ENCODE measurements at regions of chrX and their contacts with region 1.

Region 1: DNA sequence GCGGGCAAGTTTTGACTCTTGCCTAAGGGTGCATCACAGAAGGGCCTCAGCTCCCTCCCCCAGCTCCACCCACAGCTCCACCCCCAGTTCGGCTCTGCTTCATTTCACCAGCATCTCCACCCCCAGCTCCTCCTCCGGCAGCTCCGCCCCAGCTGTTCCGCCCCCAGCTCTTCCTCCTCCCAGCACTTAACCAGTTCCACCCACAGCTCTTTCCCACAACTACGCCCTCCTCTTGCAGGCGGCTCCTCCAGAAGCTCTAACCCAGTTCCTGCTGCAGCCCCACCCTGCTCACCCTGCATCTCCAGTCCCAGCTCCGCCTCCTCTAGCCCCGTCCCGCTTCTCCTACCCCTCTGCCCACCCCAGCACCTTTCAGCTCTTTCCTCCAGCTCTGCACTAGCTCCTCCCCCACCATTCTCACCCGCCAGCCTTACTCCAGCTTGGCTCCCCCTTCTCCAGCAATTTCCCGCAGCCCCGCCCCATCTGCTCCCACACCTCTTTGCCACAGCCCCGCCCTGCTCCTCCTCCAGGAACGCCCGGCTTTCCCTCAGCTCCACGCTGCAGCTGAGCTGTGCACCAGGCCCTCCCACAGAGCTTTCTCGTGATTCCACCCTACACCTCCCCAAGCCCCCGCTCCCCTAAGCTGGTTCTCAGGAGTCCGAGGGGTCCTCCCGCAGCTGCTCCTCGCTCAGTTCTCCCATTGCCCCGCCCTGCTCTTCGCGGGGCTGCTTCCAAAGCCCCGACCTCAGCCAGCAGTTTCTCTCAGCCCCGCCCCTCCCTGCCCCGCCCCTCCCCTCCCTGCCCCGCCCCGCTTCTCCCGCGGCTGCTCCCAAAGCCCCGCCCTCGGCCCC is 1.3 kb upstream of the EOLA1 start:
- DNase-seq: peak; percentile 82
- ATAC-seq: peak; percentile 57
- H3K4me3 Mint-ChIP-seq: peak overlapping the region; percentile 90
- H3K27ac Mint-ChIP-seq: peak overlapping the region; percentile 96
- H3K4me1 Mint-ChIP-seq: peaks cover 3% of the 10 kb centered on the region
- H3K27me3 Mint-ChIP-seq: no peaks in the 10 kb centered on the region

Region 2: DNA sequence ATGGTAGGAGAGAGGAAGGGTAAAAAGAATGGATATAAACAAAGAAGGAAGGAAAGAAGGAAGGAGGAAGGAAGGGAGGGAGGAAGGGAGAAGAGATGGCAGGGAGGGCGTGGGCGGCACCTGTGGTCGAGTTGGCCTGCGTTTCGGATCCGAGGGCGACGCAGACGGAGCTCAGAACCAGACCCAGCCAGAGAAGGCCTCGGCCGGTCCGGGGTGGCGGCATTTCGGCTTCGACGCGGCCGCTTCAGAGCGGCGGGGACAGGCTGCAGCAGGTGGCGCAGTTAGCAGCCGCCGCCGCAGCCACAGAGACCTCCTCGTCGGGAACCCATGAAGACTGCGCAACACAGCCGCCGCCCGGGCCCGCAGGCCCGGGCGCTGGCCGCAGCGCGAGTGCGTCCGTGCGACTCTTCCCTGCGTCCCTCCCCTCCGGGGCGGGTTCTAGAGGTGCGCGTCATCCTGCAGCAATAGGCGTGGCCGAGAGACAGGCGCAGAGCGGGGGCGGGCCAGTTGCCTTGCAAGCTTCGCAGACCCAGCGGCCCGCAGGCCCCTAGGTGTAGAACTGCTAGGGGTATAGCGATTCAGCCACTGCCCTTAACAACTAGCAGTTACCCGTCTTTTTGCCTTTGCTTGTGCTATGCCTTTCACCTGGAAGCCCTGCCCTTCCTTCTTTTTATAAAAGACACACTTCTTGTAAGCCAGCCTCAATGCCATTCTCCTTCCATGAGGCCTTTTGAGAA is 34.4 kb before region 1 on chrX and contains the start of gene IDS:
- POLR2A ChIA-PET with region 1: interaction called, 22 read pairs
- DNase-seq: peak; percentile 84
- ATAC-seq: peak; percentile 76
- H3K4me3 Mint-ChIP-seq: peak within 1 kb of the TSS; percentile 93
- H3K27ac Mint-ChIP-seq: peak within 1 kb of the TSS; percentile 97
- H3K4me1 Mint-ChIP-seq: peaks cover 21% of the 10 kb centered on the region
- H3K27me3 Mint-ChIP-seq: peaks cover 3% of the 10 kb centered on the region
- total RNA-seq, gene IDS: 108 to 109 TPM

Region 3: DNA sequence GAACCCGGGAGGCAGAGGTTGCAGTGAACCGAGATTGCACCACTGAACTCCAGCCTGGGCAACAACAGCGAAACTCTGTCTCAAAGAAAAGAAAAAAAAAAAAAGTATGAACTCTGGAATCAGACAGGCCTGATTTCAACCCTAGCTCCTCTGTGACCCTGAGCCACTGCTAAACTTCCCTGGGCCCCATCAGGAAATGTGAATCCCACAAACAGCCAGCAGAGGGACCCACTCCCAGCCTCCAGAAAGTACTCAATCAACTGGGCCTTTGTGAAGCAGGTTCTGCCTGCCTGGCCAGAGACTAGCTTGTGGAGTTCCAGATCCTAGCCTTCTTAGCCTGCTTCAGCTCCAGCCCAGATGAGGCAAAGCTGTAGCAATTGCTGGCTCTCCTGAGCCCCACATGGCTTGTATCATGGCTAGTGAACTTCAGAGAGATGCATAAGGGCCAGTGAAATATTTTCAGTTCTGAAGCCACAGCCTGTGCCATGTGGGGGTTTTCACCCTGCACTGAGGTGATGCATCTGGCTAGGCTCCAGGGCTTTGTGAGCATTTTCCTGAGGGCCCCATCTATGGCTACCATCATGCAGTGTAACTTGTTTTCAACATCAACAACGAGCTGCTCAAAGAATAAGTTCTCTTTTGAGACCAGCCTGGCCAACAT is 27.2 kb before region 1 on chrX:
- POLR2A ChIA-PET with region 1: interaction called, 12 read pairs
- DNase-seq: peak; percentile 41
- ATAC-seq: peak; percentile 71
- H3K4me3 Mint-ChIP-seq: peak overlapping the region; percentile 50
- H3K27ac Mint-ChIP-seq: peak overlapping the region; percentile 67
- H3K4me1 Mint-ChIP-seq: peaks cover 36% of the 10 kb centered on the region
- H3K27me3 Mint-ChIP-seq: peaks cover 3% of the 10 kb centered on the region

Region 4: GRCh38 chrX:149938427-149939270 is 399.1 kb after region 1 on chrX and contains the start of gene EOLA2:
- POLR2A ChIA-PET with region 1: interaction called, 19 read pairs
- DNase-seq: peak; percentile 81
- ATAC-seq: peak; percentile 52
- H3K4me3 Mint-ChIP-seq: peak within 1 kb of the TSS; percentile 98
- H3K27ac Mint-ChIP-seq: peak within 1 kb of the TSS; percentile 100
- H3K4me1 Mint-ChIP-seq: peaks cover 2% of the 10 kb centered on the region
- H3K27me3 Mint-ChIP-seq: no peaks in the 10 kb centered on the region
- total RNA-seq, gene EOLA2: 40.8 to 41.5 TPM

Measured in activated naive CD8-positive, alpha-beta T cell treated with anti-CD3 and anti-CD28 coated beads, Interleukin-2, amount 10 ng/mL, durations not matched to agents 7 days and 5 days (primary cell).